Dendritic cell treated with granulocyte-macrophage colony-stimulating factor and Interleukin-4, amounts not matched to agents 40 ng/mL and 50 ng/mL, for 4 days (primary cell): ENCODE measurements at regions of chr14 and their contacts with region 1.

Region 1: GRCh38 chr14:64636208-64636979 is 67.8 kb upstream of the PLEKHG3 start:
- H3K4me3 Mint-ChIP-seq: no peak overlapping the region
- H3K27ac Mint-ChIP-seq: no peak overlapping the region
- H3K4me1 Mint-ChIP-seq: peaks cover 7% of the 10 kb centered on the region
- H3K27me3 Mint-ChIP-seq: peaks cover 5% of the 10 kb centered on the region

Region 2: DNA sequence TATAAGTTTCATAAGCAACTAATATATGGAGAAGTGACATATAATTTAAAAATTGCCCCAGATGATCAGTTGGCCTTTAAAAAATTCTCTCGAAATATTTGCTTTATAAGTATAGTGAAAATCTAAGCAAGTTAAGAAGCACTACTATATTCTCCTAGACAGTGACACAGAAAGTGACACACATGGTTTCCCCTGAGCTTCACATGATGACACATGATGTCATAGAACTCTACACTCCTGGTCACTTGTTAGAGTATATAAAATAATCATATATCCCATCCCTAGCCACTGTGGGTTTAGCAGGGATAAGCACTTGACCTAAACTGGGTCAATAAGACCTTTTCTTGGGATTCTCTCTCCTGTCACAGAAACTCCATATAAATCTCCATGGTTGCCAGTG is 290.9 kb before region 1 on chr14:
- intact Hi-C with region 1: loop called (anchors 2 kb)
- H3K4me3 Mint-ChIP-seq: no peak overlapping the region
- H3K27ac Mint-ChIP-seq: no peak overlapping the region
- H3K4me1 Mint-ChIP-seq: peaks cover 12% of the 10 kb centered on the region
- H3K27me3 Mint-ChIP-seq: no peaks in the 10 kb centered on the region

Region 3: DNA sequence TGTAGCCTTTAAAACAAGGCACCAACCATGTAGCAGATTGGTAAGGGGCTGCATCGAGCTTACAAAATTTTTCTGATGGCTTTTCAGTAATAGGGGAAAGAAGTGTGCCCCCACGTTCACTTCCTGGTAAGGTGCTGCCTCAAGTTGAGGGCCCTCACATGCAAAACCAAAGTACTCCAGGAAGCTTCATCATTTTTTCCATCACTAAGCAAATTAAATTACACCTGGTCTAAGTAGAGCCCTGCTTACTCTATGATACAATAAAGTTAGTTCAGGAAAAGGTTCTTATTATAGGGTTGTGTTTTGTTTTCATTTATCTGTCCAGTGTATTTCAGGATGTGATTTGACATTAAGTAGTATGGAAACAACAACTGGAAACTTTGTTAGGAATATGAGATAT is 186.1 kb before region 1 on chr14:
- intact Hi-C with region 1: no loop called
- H3K4me3 Mint-ChIP-seq: no peak overlapping the region
- H3K27ac Mint-ChIP-seq: no peak overlapping the region
- H3K4me1 Mint-ChIP-seq: peaks cover 9% of the 10 kb centered on the region
- H3K27me3 Mint-ChIP-seq: no peaks in the 10 kb centered on the region

Region 4: DNA sequence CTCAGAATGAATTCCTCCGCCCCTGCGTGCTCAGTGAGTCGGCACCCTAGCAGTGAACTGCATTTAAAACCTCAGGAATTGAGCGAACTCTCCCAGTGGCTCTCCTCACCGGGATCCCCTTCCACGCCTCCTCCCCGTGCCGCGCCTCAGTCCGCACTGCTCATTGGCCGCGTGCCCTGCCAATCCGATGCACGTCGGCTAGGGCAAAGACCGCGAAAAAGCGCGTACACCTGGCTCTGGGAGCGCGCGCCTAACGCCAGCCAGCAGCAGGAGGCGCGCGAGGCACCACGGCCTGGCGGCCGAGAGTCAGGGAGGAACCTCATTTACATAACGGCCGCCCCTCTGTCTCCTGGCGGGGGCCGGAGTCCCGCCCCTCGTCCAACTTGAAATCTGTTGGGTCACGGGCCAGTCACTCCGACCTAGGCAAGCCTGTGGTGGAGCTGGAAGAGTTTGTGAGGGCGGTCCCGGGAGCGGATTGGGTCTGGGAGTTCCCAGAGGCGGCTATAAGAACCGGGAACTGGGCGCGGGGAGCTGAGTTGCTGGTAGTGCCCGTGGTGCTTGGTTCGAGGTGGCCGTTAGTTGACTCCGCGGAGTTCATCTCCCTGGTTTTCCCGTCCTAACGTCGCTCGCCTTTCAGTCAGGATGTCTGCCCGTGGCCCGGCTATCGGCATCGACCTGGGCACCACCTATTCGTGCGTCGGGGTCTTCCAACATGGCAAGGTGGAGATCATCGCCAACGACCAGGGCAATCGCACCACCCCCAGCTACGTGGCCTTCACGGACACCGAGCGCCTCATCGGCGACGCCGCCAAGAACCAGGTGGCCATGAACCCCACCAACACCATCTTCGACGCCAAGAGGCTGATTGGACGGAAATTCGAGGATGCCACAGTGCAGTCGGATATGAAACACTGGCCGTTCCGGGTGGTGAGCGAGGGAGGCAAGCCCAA is 95.9 kb before region 1 on chr14 and contains the start of gene HSPA2:
- intact Hi-C with region 1: loop called (anchors 5 kb)
- H3K4me3 Mint-ChIP-seq: peak within 1 kb of the TSS; percentile 91
- H3K27ac Mint-ChIP-seq: peak within 1 kb of the TSS; percentile 91
- H3K4me1 Mint-ChIP-seq: peaks cover 34% of the 10 kb centered on the region
- H3K27me3 Mint-ChIP-seq: peaks cover 50% of the 10 kb centered on the region

Region 5: GRCh38 chr14:64625475-64626269 is 10.7 kb before region 1 on chr14:
- intact Hi-C with region 1: no loop called
- H3K4me3 Mint-ChIP-seq: no peak overlapping the region
- H3K27ac Mint-ChIP-seq: no peak overlapping the region
- H3K4me1 Mint-ChIP-seq: no peaks in the 10 kb centered on the region
- H3K27me3 Mint-ChIP-seq: peaks cover 5% of the 10 kb centered on the region

Region 6: GRCh38 chr14:64704143-64704742 is 67.8 kb after region 1 on chr14 and contains the start of gene PLEKHG3:
- intact Hi-C with region 1: no loop called
- H3K4me3 Mint-ChIP-seq: peak within 1 kb of the TSS; percentile 79
- H3K27ac Mint-ChIP-seq: peak within 1 kb of the TSS; percentile 79
- H3K4me1 Mint-ChIP-seq: peaks cover 62% of the 10 kb centered on the region
- H3K27me3 Mint-ChIP-seq: peaks cover 21% of the 10 kb centered on the region